A549 (cell line): ENCODE measurements at regions of chr11 and their contacts with region 1.

Region 1: GRCh38 chr11:33987975-33988580 is 63.5 kb upstream of the CAPRIN1 start:
- DNase-seq: peak; percentile 41 to 88
- ATAC-seq: peak; percentile 90 to 99
- H3K4me3 ChIP-seq: no peak overlapping the region
- H3K27ac ChIP-seq: no peak overlapping the region
- H3K4me1 ChIP-seq: no peaks in the 10 kb centered on the region
- CTCF ChIP-seq: peak; percentile 67
- EP300 ChIP-seq: no peak
- POLR2A ChIP-seq: no peak
- RAD21 ChIP-seq: peak; percentile 59 to 78

Region 2: DNA sequence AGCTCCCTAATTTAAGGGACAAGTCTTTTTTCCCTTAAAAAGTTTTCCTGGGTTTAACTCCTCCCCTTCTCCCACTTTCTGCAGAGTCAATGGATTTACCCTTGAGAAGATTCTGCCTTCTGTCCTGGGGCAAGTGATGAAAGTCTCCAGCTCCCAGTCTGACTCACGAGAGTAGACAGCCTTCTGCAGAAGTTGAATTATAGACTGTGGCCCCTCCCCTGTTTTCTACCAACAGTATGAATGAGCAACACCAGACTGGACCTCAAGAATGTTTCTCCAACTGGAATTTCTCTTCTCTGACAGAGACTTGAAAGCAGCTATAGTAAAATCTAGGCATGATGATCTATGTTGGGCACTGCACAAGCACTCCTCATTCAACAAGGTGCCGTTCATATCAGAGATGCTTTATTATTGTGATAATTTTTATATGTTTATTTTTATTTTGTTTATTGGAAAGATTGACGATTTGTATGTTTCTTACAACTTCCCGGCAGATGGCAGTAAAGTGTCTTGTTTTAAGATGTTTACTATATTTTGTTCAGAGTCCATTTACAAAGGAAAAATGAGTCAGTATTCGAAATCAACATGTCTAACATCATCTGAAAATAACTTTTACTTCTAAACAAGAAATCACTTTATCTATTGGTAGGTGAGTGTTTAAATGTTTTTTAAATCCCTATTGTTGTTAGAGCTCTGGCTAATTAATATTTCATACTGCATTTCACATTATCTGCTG is 152.8 kb before region 1 on chr11:
- CTCF ChIA-PET with region 1: interaction called, 19 read pairs
- POLR2A ChIA-PET with region 1: no interaction called
- DNase-seq: peak; percentile 35 to 69
- ATAC-seq: peak; percentile 70 to 83; a peak in 5 of 6 replicates
- H3K4me3 ChIP-seq: no peak overlapping the region
- H3K27ac ChIP-seq: no peak overlapping the region
- H3K4me1 ChIP-seq: 0 out of 3 replicates have a peak, but pooled peaks cover 4% of the 10 kb centered on the region
- CTCF ChIP-seq: peak; percentile 59; the same call in 2 of the 3 replicates
- EP300 ChIP-seq: no peak
- POLR2A ChIP-seq: no peak
- RAD21 ChIP-seq: peak; percentile 63 to 73

Region 3: GRCh38 chr11:33842236-33842915 is 145.7 kb before region 1 on chr11:
- CTCF ChIA-PET with region 1: interaction called, 18 read pairs
- POLR2A ChIA-PET with region 1: no interaction called
- DNase-seq: no peak
- ATAC-seq: no peak
- H3K4me3 ChIP-seq: no peak overlapping the region
- H3K27ac ChIP-seq: no peak overlapping the region
- H3K4me1 ChIP-seq: no peaks in the 10 kb centered on the region
- CTCF ChIP-seq: no peak
- EP300 ChIP-seq: no peak
- POLR2A ChIP-seq: no peak
- RAD21 ChIP-seq: no peak

Region 4: GRCh38 chr11:33976495-33977199 is 11.4 kb before region 1 on chr11:
- CTCF ChIA-PET with region 1: interaction called, 44 read pairs
- POLR2A ChIA-PET with region 1: no interaction called
- DNase-seq: no peak
- ATAC-seq: no peak
- H3K4me3 ChIP-seq: no peak overlapping the region
- H3K27ac ChIP-seq: no peak overlapping the region
- H3K4me1 ChIP-seq: no peaks in the 10 kb centered on the region
- CTCF ChIP-seq: no peak
- EP300 ChIP-seq: no peak
- POLR2A ChIP-seq: no peak
- RAD21 ChIP-seq: no peak

Region 5: DNA sequence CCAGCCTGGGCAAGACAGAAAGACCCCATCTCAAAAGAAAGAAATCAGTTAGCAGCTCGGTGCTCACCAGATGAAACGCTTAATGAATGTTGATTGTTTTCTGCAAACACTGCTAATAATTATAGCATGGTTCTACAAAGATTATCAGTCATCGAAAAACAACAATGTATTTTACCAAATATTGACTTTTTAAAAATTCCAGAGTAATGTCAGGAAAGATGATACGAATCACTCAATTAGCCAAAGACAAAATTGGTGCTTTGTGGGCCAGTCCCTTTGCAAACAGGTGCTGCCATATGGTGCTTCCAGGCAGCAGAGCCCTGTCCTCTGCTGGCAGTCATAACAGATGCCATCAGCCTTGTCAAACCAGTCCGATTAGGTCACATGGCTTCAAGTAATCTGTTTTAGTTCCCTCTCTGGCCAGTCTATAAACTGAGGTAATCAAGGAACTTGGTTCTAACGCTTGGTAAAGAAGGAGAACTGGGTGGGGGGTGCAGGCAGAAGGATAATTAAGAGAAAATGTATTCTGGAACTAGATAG is 14.3 kb after region 1 on chr11:
- CTCF ChIA-PET with region 1: interaction called, 37 read pairs
- POLR2A ChIA-PET with region 1: no interaction called
- DNase-seq: no peak
- ATAC-seq: no peak
- H3K4me3 ChIP-seq: no peak overlapping the region
- H3K27ac ChIP-seq: no peak overlapping the region
- H3K4me1 ChIP-seq: peaks cover 7% of the 10 kb centered on the region; the same call in 2 of the 3 replicates
- CTCF ChIP-seq: no peak
- EP300 ChIP-seq: no peak
- POLR2A ChIP-seq: no peak
- RAD21 ChIP-seq: no peak

Region 6: DNA sequence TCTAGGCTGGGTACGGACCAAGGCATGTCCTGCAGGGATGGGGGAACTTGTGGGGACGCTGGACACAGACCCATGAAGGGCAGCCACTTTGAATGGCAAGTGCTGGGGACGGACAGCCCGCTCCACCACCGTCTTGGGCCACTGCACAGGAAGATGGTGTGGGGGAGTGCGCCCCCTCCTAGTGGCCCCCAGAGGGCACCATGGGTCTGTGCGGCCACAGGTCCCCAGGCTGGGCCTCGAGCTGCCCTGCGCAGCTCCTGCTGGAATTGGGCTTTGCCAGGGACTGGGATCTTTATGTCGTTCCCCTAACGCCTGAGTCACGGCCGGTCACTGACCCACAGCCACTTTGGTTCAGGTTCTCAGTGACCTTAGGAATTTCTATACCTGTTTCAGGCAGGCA is 161.7 kb after region 1 on chr11:
- CTCF ChIA-PET with region 1: no interaction called
- POLR2A ChIA-PET with region 1: no interaction called
- DNase-seq: peak; percentile 33 to 36
- ATAC-seq: peak; percentile 57 to 80
- H3K4me3 ChIP-seq: no peak overlapping the region
- H3K27ac ChIP-seq: no peak overlapping the region
- H3K4me1 ChIP-seq: no peaks in the 10 kb centered on the region
- CTCF ChIP-seq: peak; percentile 34
- EP300 ChIP-seq: no peak
- POLR2A ChIP-seq: no peak
- RAD21 ChIP-seq: peak; percentile 54 to 62